Right lobe of liver (tissue), 6 donors: ENCODE measurements at regions of chr5 and their contacts with region 1.

Region 1: DNA sequence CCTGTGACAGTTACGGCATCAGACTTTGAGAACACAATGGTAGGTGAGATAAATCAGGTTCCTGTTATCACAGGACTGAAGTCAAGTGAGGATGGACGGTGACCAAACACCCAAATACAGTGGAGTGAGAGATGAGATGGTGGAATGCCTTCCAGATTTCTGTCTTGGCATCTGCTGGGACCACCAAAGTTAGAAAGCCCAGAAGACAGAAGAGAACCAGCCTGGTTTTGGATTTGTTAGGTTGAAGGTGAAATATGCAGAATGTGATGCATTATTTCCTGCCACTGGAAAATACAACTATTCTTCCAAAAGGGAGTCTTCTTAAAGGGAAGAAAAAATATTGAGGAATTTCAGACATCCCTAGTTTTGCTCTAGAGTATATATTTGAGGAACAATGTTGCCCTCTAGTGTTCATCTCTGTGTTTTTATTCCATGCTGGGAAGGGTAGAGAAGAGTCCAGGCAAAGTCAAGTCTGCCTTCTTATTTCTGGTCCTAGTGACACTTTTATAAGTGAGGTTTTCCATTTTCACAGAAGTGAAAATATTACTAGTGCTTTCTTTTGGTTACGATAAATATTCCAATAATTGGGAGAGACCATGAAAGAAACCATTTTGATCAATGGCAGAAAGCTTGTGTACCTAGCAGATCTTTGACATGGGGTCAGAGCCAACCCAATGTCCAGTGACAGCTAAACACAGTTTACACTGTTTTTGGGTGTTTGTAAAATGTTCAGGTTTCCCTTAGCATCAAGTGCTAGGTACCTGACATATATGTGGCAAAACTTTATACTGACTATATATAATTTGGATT is 142.3 kb upstream of the ANKH start:
- DNase-seq: no peak
- ATAC-seq: peak; percentile 72 to 81 (median 78)
- H3K4me3 ChIP-seq: no peak overlapping the region
- H3K27ac ChIP-seq: peak overlapping the region; percentile 17 to 66 (median 35)
- H3K4me1 ChIP-seq: peaks cover 0 to 32% (median 12%) of the 10 kb centered on the region in 4 donors
- H3K27me3 ChIP-seq: no peaks in the 10 kb centered on the region
- CTCF ChIP-seq: peak; percentile 65 to 82 (median 72)
- POLR2A ChIP-seq: no peak

Region 2: DNA sequence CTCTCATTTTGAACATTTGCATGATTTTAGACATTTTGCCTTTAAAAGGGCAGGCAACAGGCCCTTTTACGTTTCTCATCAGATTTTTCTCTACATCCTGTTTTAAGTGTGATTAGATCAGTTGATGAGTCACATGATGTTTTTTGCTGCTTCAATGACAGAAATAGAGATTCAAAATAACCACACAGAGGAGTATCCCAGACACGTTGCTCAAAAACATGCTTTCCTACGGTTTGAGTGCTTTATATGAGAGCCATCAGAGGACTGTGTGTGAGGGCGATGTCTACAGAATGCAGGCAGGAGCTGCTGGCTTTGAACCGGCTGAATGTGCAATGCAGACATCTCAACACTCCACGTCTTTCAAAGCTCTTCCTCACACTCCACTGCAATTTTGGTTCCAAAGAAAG is 307.2 kb before region 1 on chr5:
- intact Hi-C with region 1: loop called in 1 of 2 experiments (anchors 10 kb)
- DNase-seq: no peak
- ATAC-seq: no peak
- H3K4me3 ChIP-seq: no peak overlapping the region
- H3K27ac ChIP-seq: peak overlapping the region in 1 of 3 donors; percentile 47
- H3K4me1 ChIP-seq: peaks cover 0 to 47% (median 0%) of the 10 kb centered on the region in 4 donors
- H3K27me3 ChIP-seq: no peaks in the 10 kb centered on the region
- CTCF ChIP-seq: no peak
- POLR2A ChIP-seq: no peak

Region 3: DNA sequence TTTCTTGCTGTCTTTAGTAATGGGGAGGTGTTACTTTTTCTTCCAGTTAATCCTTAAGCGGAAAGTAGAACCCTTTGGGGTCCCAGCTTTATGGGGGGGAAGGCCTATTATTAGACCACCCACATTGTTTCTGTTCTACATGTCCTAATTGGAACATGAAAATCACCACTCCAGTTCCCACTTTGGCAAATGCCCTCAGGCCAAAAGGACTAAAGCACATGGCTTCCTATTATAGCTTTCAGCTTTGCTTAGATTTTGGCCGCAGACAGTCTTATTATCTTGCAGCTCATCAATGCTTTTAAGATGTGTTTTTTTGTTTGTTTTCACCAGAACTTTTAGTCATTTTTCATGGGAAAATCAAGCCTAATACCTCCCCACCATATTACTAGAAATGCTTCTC is 154.5 kb after region 1 on chr5:
- intact Hi-C with region 1: no loop called
- DNase-seq: no peak
- ATAC-seq: no peak
- H3K4me3 ChIP-seq: no peak overlapping the region
- H3K27ac ChIP-seq: no peak overlapping the region
- H3K4me1 ChIP-seq: no peaks in the 10 kb centered on the region
- H3K27me3 ChIP-seq: no peaks in the 10 kb centered on the region
- CTCF ChIP-seq: no peak
- POLR2A ChIP-seq: no peak